ENCODE measurements at regions of chr12 and their contacts with region 1.

Region 1: GRCh38 chr12:53213348-53213747 is 6.3 kb upstream of the ITGB7 start:
- DNase-seq: peak; percentile 84 to 89
- ATAC-seq: peak; percentile 72 to 86 (median 80)
- H3K4me3 ChIP-seq: peak overlapping the region in 7 of 10 donors; percentile 10 to 46 (median 41)
- H3K27ac ChIP-seq: peak overlapping the region in 8 of 10 donors; percentile 78 to 100 (median 98)
- H3K4me1 ChIP-seq: peaks cover 13 to 74% (median 63%) of the 10 kb centered on the region in 9 donors
- H3K27me3 ChIP-seq: no peaks in the 10 kb centered on the region
- CTCF ChIP-seq: peak; percentile 93 to 98 (median 95)

Region 2: GRCh38 chr12:53267999-53268647 is 54.8 kb after region 1 on chr12 and contains the start of gene ESPL1:
- intact Hi-C with region 1: loop called in 3 of 10 experiments (anchors 5 kb)
- DNase-seq: peak; percentile 70 to 75
- ATAC-seq: peak; percentile 86 to 97 (median 94)
- H3K4me3 ChIP-seq: peak within 1 kb of the TSS; percentile 54 to 73 (median 62)
- H3K27ac ChIP-seq: peak within 1 kb of the TSS in 7 of 10 donors; percentile 6 to 64 (median 37)
- H3K4me1 ChIP-seq: peaks cover 0 to 25% (median 5%) of the 10 kb centered on the region in 9 donors
- H3K27me3 ChIP-seq: no peaks in the 10 kb centered on the region
- CTCF ChIP-seq: peak in 7 of 9 donors; percentile 6 to 63 (median 34)
- total RNA-seq, gene ESPL1: 0.04 to 3.1 (median 0.36) TPM

Measured in heart right ventricle (tissue), 16 donors.